ENCODE measurements at regions of chr2 and their contacts with region 1.

Region 1: GRCh38 chr2:182650704-182651103 is 65.4 kb upstream of the DNAJC10 start:
- DNase-seq: peak in 2 of 4 experiments; percentile 22 to 34
- ATAC-seq: peak; percentile 63
- H3K4me3 ChIP-seq: no peak overlapping the region
- H3K27ac ChIP-seq: no peak overlapping the region
- H3K4me1 ChIP-seq: no peaks in the 10 kb centered on the region
- H3K27me3 ChIP-seq: no peaks in the 10 kb centered on the region
- CTCF ChIP-seq: peak; percentile 40 to 74 (median 43); a peak in 4 of 6 replicates
- EP300 ChIP-seq: no peak
- POLR2A ChIP-seq: no peak
- RAD21 ChIP-seq: peak; percentile 81 to 88

Region 2: DNA sequence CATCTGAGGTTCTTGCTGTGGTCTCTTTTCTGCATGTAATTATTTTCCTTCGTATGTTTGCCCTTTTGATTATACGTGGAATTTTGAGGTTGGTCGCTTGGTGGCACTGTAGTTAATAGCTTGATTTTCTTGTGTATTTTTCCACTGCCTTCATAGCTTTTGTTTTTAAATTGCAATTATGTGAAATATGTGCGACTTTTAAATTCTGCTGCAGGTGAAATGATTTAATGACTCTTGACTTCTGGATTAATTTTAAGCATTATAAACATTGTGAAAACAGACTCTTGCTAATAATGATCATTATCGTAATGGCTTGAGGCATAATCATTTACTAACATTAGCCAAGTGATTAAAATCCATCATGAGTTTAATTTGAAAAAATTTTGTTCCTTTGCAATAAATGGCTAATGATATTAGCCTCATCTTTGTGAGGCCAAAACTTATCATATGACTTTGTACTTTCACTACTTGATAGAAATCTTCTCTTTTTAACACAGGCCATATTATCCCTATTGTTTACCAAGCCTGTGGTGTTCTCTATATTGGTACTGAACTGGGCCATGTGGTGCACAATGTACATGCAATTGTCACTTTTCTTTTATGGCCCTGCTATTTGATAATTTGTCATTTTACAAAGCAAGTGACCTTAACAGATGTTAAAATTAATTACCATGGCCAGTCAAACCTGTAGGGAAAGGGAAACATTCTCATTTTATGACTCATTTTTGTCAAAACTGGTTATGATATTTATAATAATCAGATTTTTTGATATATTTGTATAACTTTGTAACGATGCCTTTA is 907.6 kb before region 1 on chr2:
- CTCF ChIA-PET with region 1: interaction called, 5 read pairs
- POLR2A ChIA-PET with region 1: no interaction called
- in situ Hi-C with region 1: loop called (anchors 25 kb)
- intact Hi-C with region 1: loop called (anchors 1 kb)
- DNase-seq: peak in 2 of 4 experiments; percentile 39 to 68
- ATAC-seq: peak; percentile 81
- H3K4me3 ChIP-seq: no peak overlapping the region
- H3K27ac ChIP-seq: no peak overlapping the region
- H3K4me1 ChIP-seq: no peaks in the 10 kb centered on the region
- H3K27me3 ChIP-seq: no peaks in the 10 kb centered on the region
- CTCF ChIP-seq: peak; percentile 53 to 86 (median 69); a peak in 5 of 6 replicates
- EP300 ChIP-seq: no peak
- POLR2A ChIP-seq: no peak
- RAD21 ChIP-seq: peak; percentile 94 to 95

Region 3: DNA sequence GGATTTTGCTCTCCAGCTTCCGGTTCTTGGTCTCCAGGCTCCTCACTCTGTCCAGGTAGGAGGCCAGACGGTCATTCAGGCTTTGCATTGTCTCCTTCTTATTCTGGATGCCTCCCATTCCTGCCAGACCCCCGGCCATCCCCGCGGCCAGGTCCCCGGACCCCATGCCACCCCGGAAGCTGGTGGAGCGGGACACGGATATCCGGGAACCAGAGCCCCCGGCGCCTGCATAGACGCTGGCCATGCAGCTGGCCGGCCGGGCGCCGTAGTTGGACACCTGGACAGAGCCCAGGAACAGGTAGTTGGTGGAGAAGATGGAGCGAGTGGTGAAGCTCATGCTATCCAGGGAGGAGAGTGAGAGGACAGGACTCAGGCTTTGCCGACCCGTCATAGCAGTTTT is 688.6 kb before region 1 on chr2:
- CTCF ChIA-PET with region 1: no interaction called
- POLR2A ChIA-PET with region 1: no interaction called
- in situ Hi-C with region 1: no loop called
- intact Hi-C with region 1: loop called (anchors 10 kb)
- DNase-seq: no peak
- ATAC-seq: no peak
- H3K4me3 ChIP-seq: no peak overlapping the region
- H3K27ac ChIP-seq: no peak overlapping the region
- H3K4me1 ChIP-seq: 0 out of 5 replicates have a peak, but pooled peaks cover 0 to 3% of the 10 kb centered on the region in 2 experiments
- H3K27me3 ChIP-seq: peaks cover 0 to 12% of the 10 kb centered on the region in 2 experiments; a peak in 1 of 5 replicates
- CTCF ChIP-seq: no peak
- EP300 ChIP-seq: no peak
- POLR2A ChIP-seq: no peak
- RAD21 ChIP-seq: no peak

Region 4: DNA sequence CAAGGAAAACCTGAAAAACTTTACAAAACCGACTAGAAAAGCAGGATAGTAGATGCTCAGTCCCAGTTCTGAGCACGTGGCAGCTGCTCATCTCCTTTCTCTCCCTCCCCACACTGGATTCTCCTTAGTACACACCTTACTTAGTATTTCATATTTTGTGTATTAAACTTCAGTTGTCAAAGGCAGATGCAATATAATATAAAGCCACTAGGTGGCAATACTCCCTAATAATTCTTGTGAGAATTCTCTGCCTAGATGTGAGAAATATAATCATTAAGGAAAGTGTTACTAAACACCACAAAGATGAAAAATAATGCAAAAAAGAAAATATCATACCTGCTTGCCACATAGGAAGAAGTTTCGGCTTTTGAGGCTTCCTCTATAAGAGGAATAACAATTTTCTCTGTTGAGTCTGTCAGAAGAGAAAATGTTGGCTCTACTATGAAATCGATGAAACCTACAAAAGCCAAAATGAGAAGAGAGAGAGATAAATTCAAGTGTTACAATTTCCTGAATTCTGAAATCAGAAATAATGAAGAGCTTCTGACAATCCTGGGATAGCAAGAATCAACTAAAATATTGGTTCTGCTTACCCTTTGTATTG is 464.5 kb before region 1 on chr2:
- CTCF ChIA-PET with region 1: interaction called, 27 read pairs
- POLR2A ChIA-PET with region 1: interaction called, 6 read pairs
- in situ Hi-C with region 1: loop called (anchors 5 kb)
- intact Hi-C with region 1: loop called (anchors 1 kb)
- DNase-seq: peak; percentile 13 to 51 (median 16)
- ATAC-seq: peak; percentile 83
- H3K4me3 ChIP-seq: no peak overlapping the region
- H3K27ac ChIP-seq: no peak overlapping the region
- H3K4me1 ChIP-seq: no peaks in the 10 kb centered on the region
- H3K27me3 ChIP-seq: no peaks in the 10 kb centered on the region
- CTCF ChIP-seq: peak; percentile 57 to 88 (median 63); a peak in 5 of 6 replicates
- EP300 ChIP-seq: no peak
- POLR2A ChIP-seq: no peak
- RAD21 ChIP-seq: peak; percentile 89 to 90

Region 5: DNA sequence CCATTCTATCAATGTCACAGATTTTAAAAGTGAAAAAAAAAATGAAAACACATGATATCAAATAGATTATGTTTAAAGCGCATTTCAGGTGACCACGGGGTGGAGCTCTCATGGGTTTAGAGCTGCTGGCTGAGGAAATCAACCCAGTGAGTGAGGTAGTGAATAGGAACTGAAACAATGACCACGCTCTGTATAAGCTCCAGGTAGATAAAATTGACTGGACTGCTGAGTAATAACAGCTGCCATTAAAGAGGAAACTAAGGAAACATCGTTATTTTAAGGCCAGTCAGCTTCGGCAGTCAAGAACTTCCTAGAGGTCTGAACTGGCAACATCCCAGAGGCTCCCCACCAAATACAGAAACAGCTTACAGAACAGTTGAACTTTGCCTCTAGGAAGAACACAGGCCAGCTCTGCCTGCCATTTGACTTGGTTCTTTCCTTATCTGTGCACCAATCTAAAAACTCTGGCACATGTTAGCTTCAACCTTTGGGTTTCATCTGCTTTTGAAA is 409.8 kb before region 1 on chr2:
- CTCF ChIA-PET with region 1: interaction called, 6 read pairs
- POLR2A ChIA-PET with region 1: no interaction called
- in situ Hi-C with region 1: no loop called
- intact Hi-C with region 1: loop called (anchors 2 kb)
- DNase-seq: peak in 1 of 4 experiments; percentile 13
- ATAC-seq: peak; percentile 67
- H3K4me3 ChIP-seq: no peak overlapping the region
- H3K27ac ChIP-seq: no peak overlapping the region
- H3K4me1 ChIP-seq: no peaks in the 10 kb centered on the region
- H3K27me3 ChIP-seq: no peaks in the 10 kb centered on the region
- CTCF ChIP-seq: peak; percentile 17 to 29 (median 25); a peak in 2 of 6 replicates
- EP300 ChIP-seq: no peak
- POLR2A ChIP-seq: no peak
- RAD21 ChIP-seq: peak; percentile 44 to 45

Region 6: GRCh38 chr2:182593394-182593975 is 57.2 kb before region 1 on chr2:
- CTCF ChIA-PET with region 1: no interaction called
- POLR2A ChIA-PET with region 1: no interaction called
- in situ Hi-C with region 1: no loop called
- intact Hi-C with region 1: loop called (anchors 5 kb)
- DNase-seq: no peak
- ATAC-seq: no peak
- H3K4me3 ChIP-seq: no peak overlapping the region
- H3K27ac ChIP-seq: no peak overlapping the region
- H3K4me1 ChIP-seq: no peaks in the 10 kb centered on the region
- H3K27me3 ChIP-seq: no peaks in the 10 kb centered on the region
- CTCF ChIP-seq: no peak
- EP300 ChIP-seq: no peak
- POLR2A ChIP-seq: no peak
- RAD21 ChIP-seq: no peak

Region 7: DNA sequence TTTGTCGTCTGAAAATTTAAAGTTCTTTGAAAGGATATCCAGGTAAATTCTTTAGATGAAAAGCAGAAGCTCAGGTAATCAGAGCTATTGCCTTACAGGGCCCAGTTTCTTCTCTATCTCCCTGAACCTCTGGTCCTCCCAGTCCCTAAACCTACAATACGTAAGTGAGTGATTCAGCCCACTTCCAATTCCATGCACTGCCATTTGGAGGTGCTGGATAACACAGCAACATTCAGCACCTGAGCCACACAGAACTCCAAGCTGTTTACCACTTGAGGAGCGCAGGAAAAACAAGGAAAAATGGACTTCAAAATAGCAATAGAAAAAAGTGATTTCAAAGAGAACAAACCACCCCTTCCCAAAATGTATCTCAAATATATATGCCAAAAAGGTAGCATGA is 39.7 kb before region 1 on chr2:
- CTCF ChIA-PET with region 1: interaction called, 4 read pairs
- POLR2A ChIA-PET with region 1: no interaction called
- in situ Hi-C with region 1: no loop called
- intact Hi-C with region 1: loop called (anchors 5 kb)
- DNase-seq: no peak
- ATAC-seq: peak; percentile 73
- H3K4me3 ChIP-seq: no peak overlapping the region
- H3K27ac ChIP-seq: no peak overlapping the region
- H3K4me1 ChIP-seq: peaks cover 0 to 7% of the 10 kb centered on the region in 2 experiments; a peak in 1 of 5 replicates
- H3K27me3 ChIP-seq: no peaks in the 10 kb centered on the region
- CTCF ChIP-seq: peak; percentile 20 to 49 (median 38); a peak in 4 of 6 replicates
- EP300 ChIP-seq: no peak
- POLR2A ChIP-seq: no peak
- RAD21 ChIP-seq: peak; percentile 22 to 53; a peak in 3 of 4 replicates